ENCODE measurements at regions of chr3 and their contacts with region 1.

Region 1: DNA sequence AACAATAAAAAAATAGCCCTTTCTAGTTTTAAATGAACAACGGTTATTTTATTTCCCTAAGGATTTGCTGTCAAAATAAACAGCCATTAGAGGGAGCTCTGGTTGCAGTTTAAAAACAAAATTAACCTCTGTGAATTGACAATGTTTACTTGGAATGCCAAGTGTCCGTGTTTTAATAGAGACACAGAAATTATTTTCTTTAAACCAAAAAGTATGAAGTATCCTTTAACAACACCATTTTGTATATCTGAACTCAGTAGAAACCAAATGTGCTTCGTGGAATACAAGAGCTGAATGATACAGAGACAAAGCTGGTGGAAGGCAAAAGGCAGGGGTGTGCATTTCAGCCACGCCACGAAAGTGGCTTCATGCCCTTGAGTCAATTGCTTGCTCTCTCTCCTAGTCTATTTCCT is 74.4 kb downstream of the MOBP start:
- DNase-seq: peak; percentile 49
- H3K4me3 Mint-ChIP-seq: no peak overlapping the region
- H3K27ac Mint-ChIP-seq: no peak overlapping the region
- H3K4me1 Mint-ChIP-seq: no peaks in the 10 kb centered on the region
- H3K27me3 Mint-ChIP-seq: no peaks in the 10 kb centered on the region
- CTCF ChIP-seq: peak; percentile 32

Region 2: DNA sequence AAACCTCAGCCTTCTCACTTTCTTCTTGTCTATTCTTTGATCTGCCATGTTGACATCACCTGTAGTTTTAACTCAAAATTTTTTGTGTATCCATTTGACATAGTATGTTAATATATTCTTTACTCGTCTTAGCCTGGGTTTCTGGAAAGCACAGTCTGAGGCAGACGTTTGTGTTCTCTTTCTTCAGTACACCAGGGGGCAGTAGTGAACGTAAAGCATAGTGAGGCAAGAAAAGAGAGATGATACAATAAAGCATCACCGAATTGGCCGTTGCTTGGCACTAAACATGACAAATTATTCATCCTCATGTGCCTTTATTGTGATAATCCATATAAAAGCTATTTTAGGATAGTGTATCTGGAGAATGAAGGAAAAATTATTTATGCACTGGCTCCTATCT is 126.5 kb after region 1 on chr3:
- CTCF ChIA-PET with region 1: interaction called, 5 read pairs
- POLR2A ChIA-PET with region 1: no interaction called
- intact Hi-C with region 1: loop called (anchors 2 kb)
- DNase-seq: peak; percentile 73
- H3K4me3 Mint-ChIP-seq: no peak overlapping the region
- H3K27ac Mint-ChIP-seq: no peak overlapping the region
- H3K4me1 Mint-ChIP-seq: peaks cover 15% of the 10 kb centered on the region
- H3K27me3 Mint-ChIP-seq: no peaks in the 10 kb centered on the region
- CTCF ChIP-seq: peak; percentile 48

Region 3: GRCh38 chr3:39809181-39809994 is 267.5 kb after region 1 on chr3 and contains the start of gene MYRIP:
- CTCF ChIA-PET with region 1: interaction called, 4 read pairs
- POLR2A ChIA-PET with region 1: no interaction called
- intact Hi-C with region 1: loop called (anchors 5 kb)
- DNase-seq: peak; percentile 36
- H3K4me3 Mint-ChIP-seq: peak within 1 kb of the TSS; percentile 69
- H3K27ac Mint-ChIP-seq: no peak within 1 kb of the TSS
- H3K4me1 Mint-ChIP-seq: peaks cover 11% of the 10 kb centered on the region
- H3K27me3 Mint-ChIP-seq: peaks cover 24% of the 10 kb centered on the region
- CTCF ChIP-seq: no peak
- total RNA-seq, gene MYRIP: 0.10 and 0.19 TPM in 2 replicates

Region 4: GRCh38 chr3:40170395-40170794 is 628.5 kb after region 1 on chr3:
- CTCF ChIA-PET with region 1: interaction called, 11 read pairs
- POLR2A ChIA-PET with region 1: no interaction called
- intact Hi-C with region 1: no loop called
- DNase-seq: no peak
- H3K4me3 Mint-ChIP-seq: no peak overlapping the region
- H3K27ac Mint-ChIP-seq: no peak overlapping the region
- H3K4me1 Mint-ChIP-seq: no peaks in the 10 kb centered on the region
- H3K27me3 Mint-ChIP-seq: no peaks in the 10 kb centered on the region
- CTCF ChIP-seq: no peak

Measured in MCF 10A (cell line).